ENCODE measurements at regions of chr4 and their contacts with region 1.

Region 1: DNA sequence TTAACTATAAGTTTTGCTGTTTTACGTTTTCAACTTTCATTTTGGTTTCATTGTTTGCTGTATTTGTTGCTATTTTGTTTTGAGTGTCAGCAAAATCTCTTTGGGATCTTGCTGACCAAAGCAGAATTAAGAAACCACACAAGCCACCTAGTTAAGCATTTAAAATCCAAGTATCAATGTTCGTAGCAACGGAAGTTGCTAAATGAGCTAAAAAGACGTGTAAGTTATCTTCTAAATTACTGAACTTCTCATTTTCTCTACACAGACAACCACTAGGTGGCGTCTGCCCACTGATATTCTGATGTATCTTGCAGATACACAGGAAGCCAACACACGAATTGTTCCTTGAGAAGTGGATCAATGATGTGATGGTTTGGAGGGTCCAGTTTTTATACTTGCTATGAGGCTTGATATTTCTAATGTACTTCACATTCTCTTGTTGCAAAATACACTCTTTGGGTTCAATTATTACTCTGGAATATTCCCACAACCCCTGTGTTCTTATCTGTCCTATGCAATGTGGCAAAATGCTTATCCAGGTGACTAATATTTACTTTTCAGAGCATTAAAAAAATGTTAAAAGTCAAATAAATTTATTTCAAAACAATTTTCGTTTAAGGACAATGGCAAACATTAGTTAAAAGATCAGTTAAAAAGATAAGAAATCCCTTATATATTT is 250.5 kb downstream of the TECRL start:
- DNase-seq: peak; percentile 53
- H3K4me3 Mint-ChIP-seq: no peak overlapping the region
- H3K27ac Mint-ChIP-seq: no peak overlapping the region
- H3K4me1 Mint-ChIP-seq: no peaks in the 10 kb centered on the region
- H3K27me3 Mint-ChIP-seq: no peaks in the 10 kb centered on the region

Region 2: DNA sequence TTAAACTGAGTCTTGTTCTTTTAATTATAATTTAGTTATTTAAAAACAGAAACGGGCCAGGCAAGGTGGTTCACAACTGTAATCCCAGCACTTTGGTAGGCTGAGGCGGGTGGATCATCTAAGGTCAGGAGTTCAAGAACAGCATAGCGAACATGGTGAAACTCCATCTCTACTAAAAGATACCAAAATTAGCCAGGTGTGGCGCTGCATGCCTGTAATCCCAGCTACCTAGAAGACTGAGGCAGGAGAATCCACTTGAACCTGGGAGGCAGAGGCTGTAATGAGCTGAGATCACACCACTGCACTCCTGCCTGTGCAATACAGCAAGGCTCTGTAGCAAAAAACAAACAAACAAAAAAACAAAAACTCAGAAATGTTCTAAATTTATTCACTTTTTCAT is 602.5 kb before region 1 on chr4:
- CTCF ChIA-PET with region 1: no interaction called
- POLR2A ChIA-PET with region 1: no interaction called
- intact Hi-C with region 1: no loop called
- DNase-seq: no peak
- H3K4me3 Mint-ChIP-seq: no peak overlapping the region
- H3K27ac Mint-ChIP-seq: no peak overlapping the region
- H3K4me1 Mint-ChIP-seq: no peaks in the 10 kb centered on the region
- H3K27me3 Mint-ChIP-seq: no peaks in the 10 kb centered on the region

Region 3: DNA sequence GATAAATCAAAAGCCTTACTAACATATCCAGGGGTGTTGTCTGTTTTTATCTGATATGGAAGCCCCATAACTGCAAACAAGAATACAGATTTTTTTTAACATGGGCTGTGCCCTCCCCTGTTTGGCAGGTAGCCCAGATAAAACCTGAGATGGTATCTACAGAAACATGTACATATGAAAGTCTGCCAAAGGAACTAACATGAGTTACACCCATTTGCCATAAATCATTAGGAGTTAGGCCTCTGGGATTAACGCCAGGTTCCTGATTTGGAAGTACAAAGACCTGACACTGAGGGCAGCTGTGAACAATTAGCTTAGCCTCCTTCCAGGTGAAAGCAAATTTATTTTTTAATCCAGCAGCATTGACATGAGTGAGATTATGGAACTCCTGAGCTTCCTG is 13.8 kb before region 1 on chr4:
- CTCF ChIA-PET with region 1: no interaction called
- POLR2A ChIA-PET with region 1: no interaction called
- intact Hi-C with region 1: no loop called
- DNase-seq: no peak
- H3K4me3 Mint-ChIP-seq: no peak overlapping the region
- H3K27ac Mint-ChIP-seq: no peak overlapping the region
- H3K4me1 Mint-ChIP-seq: no peaks in the 10 kb centered on the region
- H3K27me3 Mint-ChIP-seq: no peaks in the 10 kb centered on the region

Region 4: GRCh38 chr4:64539234-64539849 is 380.6 kb after region 1 on chr4:
- CTCF ChIA-PET with region 1: interaction called, 5 read pairs
- POLR2A ChIA-PET with region 1: no interaction called
- intact Hi-C with region 1: loop called (anchors 1 kb)
- DNase-seq: peak; percentile 24
- H3K4me3 Mint-ChIP-seq: no peak overlapping the region
- H3K27ac Mint-ChIP-seq: no peak overlapping the region
- H3K4me1 Mint-ChIP-seq: no peaks in the 10 kb centered on the region
- H3K27me3 Mint-ChIP-seq: no peaks in the 10 kb centered on the region

Region 5: GRCh38 chr4:64584981-64585557 is 426.3 kb after region 1 on chr4:
- CTCF ChIA-PET with region 1: no interaction called
- POLR2A ChIA-PET with region 1: no interaction called
- intact Hi-C with region 1: loop called (anchors 2 kb)
- DNase-seq: no peak
- H3K4me3 Mint-ChIP-seq: no peak overlapping the region
- H3K27ac Mint-ChIP-seq: no peak overlapping the region
- H3K4me1 Mint-ChIP-seq: no peaks in the 10 kb centered on the region
- H3K27me3 Mint-ChIP-seq: no peaks in the 10 kb centered on the region

Region 6: GRCh38 chr4:65152205-65152604 is 993.4 kb after region 1 on chr4:
- CTCF ChIA-PET with region 1: no interaction called
- POLR2A ChIA-PET with region 1: no interaction called
- intact Hi-C with region 1: no loop called
- DNase-seq: no peak
- H3K4me3 Mint-ChIP-seq: no peak overlapping the region
- H3K27ac Mint-ChIP-seq: no peak overlapping the region
- H3K4me1 Mint-ChIP-seq: no peaks in the 10 kb centered on the region
- H3K27me3 Mint-ChIP-seq: no peaks in the 10 kb centered on the region

Measured in activated CD4-positive, alpha-beta memory T cell treated with anti-CD3 and anti-CD28 coated beads for 36 hours (primary cell).